ENCODE measurements at regions of chr16 and their contacts with region 1.

Region 1: DNA sequence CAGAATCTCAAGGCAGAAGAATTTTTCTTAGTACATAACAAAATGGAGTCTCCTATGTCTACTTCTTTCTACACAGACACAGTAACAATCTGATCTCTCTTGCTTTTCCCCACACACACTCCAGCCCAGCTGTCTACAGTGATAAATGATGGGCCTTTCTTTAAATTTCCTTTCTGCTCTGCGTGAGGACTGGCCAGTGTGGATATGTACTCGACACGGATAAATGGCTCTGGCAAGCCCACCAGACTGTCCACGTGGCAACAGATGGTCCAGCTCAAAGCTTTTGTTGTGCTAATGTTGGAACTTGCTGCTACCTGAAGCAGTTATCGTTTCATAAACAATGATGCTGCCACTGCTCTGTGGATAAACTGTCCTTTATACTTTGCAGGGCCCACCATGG is 410.7 kb downstream of the TMEM114 start:
- DNase-seq: no peak
- ATAC-seq: no peak

Region 2: DNA sequence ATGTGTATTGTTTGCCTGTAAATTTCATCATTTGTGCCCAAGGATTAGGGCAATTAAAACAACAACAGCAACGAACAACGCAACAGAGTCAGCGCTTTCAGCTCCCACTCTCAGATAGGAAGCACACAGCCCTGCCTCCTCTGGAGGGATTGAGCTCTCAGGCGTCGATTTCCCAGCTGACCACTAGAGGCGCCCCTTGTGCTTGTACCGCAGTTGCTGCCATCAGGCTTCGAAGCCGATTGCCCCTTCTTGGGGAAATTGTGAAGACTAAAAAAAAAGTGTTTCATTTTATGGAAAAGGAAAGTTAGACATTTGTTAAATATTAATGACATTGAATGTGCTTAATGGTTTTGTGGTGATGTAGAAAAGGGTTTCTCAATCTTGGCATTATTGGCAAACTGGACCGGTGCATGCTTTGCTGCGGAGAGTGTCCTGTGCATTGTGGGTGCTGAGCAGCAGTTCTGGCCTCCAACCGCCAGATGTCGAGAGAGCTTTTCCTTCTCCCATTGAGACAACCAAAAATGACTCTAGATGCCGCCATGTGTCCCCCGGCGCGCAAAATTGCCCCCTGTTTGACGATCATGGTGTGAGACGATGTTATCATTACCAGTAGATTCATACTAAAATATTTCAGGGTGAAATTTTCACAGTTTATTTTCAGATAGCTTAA is 1497.3 kb before region 1 on chr16:
- intact Hi-C with region 1: loop called in 1 of 2 experiments (anchors 5 kb)
- DNase-seq: peak; percentile 18
- ATAC-seq: no peak

Region 3: DNA sequence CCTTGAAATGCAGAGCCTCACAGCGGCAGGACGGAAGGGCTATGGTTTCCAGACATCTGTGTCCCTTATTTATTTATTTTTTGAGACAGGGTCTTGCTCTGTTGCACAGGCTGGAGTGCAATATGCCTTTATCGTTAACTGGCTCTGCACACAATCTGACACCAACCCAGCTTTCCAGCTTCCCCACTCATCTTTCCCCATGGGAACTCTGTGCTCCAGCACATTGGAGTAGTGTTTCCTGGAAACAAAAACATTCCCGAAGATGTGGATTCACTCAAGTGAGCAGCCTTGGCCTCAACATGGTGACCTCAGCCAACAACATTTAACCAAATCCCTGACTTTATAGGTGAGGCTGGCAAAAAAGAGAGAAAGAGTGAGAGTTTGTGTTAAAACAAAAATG is 103.6 kb after region 1 on chr16:
- intact Hi-C with region 1: no loop called
- DNase-seq: no peak
- ATAC-seq: no peak

Measured in left cardiac atrium (tissue), 4 donors.